A673 (cell line): ENCODE measurements at regions of chr2 and their contacts with region 1.

Region 1: DNA sequence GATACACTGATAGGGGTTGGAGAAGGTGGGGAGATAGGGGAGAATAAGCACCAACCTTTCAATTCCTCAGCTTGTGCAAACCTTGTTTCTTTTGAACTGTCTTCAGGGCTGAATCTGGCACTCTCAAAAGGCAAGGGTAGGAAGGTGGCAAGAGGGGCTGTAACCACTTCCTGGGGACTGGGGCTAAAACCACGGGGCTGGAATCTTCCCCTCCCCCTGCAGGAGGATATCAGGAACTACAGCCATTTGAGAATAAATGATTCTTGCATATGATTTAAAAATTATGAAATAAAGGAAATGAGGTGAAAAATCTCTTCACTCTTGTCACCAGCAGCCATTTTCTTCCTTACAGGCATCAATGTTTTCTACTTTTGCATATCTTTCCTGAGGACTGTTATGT is 50.8 kb downstream of the ATOH8 start:
- DNase-seq: peak; percentile 65
- H3K4me3 ChIP-seq: no peak overlapping the region
- H3K27ac ChIP-seq: no peak overlapping the region
- H3K4me1 ChIP-seq: peaks cover 6% of the 10 kb centered on the region
- H3K27me3 ChIP-seq: no peaks in the 10 kb centered on the region
- CTCF ChIP-seq: peak; percentile 71

Region 2: GRCh38 chr2:85649201-85650190 is 155.1 kb before region 1 on chr2:
- CTCF ChIA-PET with region 1: no interaction called
- POLR2A ChIA-PET with region 1: no interaction called
- intact Hi-C with region 1: no loop called
- DNase-seq: no peak
- H3K4me3 ChIP-seq: no peak overlapping the region
- H3K27ac ChIP-seq: no peak overlapping the region
- H3K4me1 ChIP-seq: no peaks in the 10 kb centered on the region
- H3K27me3 ChIP-seq: no peaks in the 10 kb centered on the region
- CTCF ChIP-seq: no peak

Region 3: DNA sequence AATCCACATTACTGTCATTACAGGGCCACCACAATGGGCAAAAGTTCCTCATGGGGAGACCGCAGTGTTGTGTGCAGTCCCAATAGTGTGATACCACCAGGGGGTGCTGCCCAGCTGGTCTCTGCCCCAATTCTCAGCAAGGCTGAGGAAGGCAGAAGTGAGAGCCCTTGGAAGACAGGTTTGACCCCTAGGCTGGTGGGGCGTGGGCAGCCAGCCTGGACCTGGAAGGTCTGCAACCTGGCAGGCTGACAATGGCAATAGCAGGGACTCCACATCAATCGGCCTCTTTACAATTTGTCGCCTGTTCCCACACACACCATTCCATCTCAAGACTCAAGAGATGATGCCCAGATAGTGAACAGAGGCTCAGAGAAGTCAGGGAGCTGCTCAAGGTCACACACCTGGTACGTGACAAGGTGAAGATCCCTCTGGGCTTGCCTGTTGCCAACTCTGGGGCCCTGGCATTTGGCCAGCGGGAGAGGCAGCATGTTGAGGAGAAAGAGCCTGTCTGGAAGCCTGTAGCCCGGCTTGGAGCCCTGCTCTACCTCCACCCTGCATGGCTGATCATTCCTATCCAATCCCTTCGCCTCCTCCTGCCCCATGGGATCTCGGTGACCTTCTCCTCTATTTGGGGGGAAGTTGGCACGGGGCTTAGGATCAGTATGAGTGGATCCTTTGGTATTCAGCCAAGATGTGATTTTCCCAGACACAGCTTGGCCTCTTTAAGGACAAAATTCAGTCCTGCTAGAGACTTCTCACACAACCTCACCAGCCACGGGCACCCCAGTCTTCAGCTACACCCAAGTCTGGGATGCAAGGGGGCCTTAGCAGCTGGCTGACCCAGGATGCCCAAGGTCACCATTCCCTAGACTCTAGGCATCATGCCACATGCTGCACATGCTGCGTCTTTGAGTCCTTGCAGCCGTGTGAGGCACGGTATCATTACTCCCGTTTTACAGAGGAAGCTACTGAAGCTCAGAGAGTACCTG is 53.7 kb before region 1 on chr2:
- CTCF ChIA-PET with region 1: no interaction called
- POLR2A ChIA-PET with region 1: no interaction called
- intact Hi-C with region 1: loop called (anchors 2 kb)
- DNase-seq: peak; percentile 68
- H3K4me3 ChIP-seq: no peak overlapping the region
- H3K27ac ChIP-seq: no peak overlapping the region
- H3K4me1 ChIP-seq: peaks cover 29% of the 10 kb centered on the region
- H3K27me3 ChIP-seq: no peaks in the 10 kb centered on the region
- CTCF ChIP-seq: peak; percentile 93